PC-9 (cell line): ENCODE measurements at regions of chr7 and their contacts with region 1.

Region 1: GRCh38 chr7:43729214-43729923 is at the start of gene COA1:
- DNase-seq: peak; percentile 88
- H3K4me3 ChIP-seq: peak within 1 kb of the TSS; percentile 70
- H3K27ac ChIP-seq: peak within 1 kb of the TSS; percentile 73
- H3K4me1 ChIP-seq: peaks cover 39% of the 10 kb centered on the region
- H3K27me3 ChIP-seq: no peaks in the 10 kb centered on the region
- CTCF ChIP-seq: no peak
- total RNA-seq, gene COA1: 128 and 151 TPM in 2 replicates

Region 2: DNA sequence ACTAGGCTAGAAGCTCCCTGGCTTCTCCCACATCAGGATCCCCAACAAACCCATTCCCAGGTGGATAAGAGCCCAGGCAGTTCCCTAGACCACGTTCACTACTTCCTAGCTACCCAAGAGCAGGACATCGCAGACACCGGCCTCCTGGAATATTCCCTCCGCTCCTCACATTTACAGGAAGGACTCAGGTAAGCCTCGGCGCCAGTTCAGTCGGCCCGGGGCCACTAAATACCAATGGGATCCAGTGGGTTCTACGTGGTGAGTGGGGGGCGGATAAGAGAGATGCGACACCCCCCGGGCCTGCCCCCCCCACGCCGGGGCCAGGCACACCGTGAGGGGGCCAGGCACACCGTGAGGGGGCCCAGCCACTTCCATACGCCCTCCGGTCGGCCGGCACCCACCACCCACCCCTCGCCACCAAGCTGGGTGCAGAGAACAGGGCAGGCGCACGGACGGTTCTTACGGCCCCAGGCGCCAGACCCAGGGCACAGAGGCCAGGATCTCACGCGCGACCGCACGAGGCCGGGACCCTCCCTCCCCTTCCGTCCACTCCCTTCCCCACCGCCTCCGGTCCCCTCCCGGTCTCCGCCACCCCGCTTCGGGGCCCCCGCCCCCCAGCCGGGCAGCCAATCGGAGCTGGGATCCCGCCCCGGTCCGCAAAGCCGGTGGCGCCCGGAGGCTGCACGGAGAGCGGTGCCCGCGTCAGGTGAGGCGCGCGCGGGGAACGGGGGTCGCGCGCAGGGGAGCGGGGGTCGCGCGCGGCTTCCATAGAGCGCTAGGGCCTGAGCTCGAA is 28.9 kb after region 1 on chr7 and contains the start of gene BLVRA:
- CTCF ChIA-PET with region 1: interaction called, 3 read pairs
- POLR2A ChIA-PET with region 1: interaction called, 6 read pairs
- intact Hi-C with region 1: loop called (anchors 2 kb)
- DNase-seq: peak; percentile 28 to 69
- H3K4me3 ChIP-seq: peak within 1 kb of the TSS; percentile 85
- H3K27ac ChIP-seq: no peak within 1 kb of the TSS
- H3K4me1 ChIP-seq: peaks cover 78% of the 10 kb centered on the region
- H3K27me3 ChIP-seq: no peaks in the 10 kb centered on the region
- CTCF ChIP-seq: no peak
- total RNA-seq, gene BLVRA: 36.4 and 49.5 TPM in 2 replicates

Region 3: GRCh38 chr7:43764039-43764761 is 34.8 kb after region 1 on chr7:
- CTCF ChIA-PET with region 1: interaction called, 3 read pairs
- POLR2A ChIA-PET with region 1: interaction called, 13 read pairs
- intact Hi-C with region 1: no loop called
- DNase-seq: peak in 1 of 2 experiments; percentile 31
- H3K4me3 ChIP-seq: peak overlapping the region; percentile 7; the same call in 1 of the 2 replicates
- H3K27ac ChIP-seq: peak overlapping the region; percentile 71
- H3K4me1 ChIP-seq: peaks cover 73% of the 10 kb centered on the region
- H3K27me3 ChIP-seq: no peaks in the 10 kb centered on the region
- CTCF ChIP-seq: no peak

Region 4: GRCh38 chr7:43779032-43779812 is 49.9 kb after region 1 on chr7:
- CTCF ChIA-PET with region 1: interaction called, 4 read pairs
- POLR2A ChIA-PET with region 1: interaction called, 6 read pairs
- intact Hi-C with region 1: loop called (anchors 2 kb)
- DNase-seq: no peak
- H3K4me3 ChIP-seq: peak overlapping the region; percentile 43; the same call in 1 of the 2 replicates
- H3K27ac ChIP-seq: 0 out of 2 replicates have a peak overlapping the region, but pooled peaks have one; percentile 25
- H3K4me1 ChIP-seq: peaks cover 34% of the 10 kb centered on the region
- H3K27me3 ChIP-seq: no peaks in the 10 kb centered on the region
- CTCF ChIP-seq: no peak

Region 5: GRCh38 chr7:43954524-43955228 is 225.3 kb after region 1 on chr7:
- CTCF ChIA-PET with region 1: no interaction called
- POLR2A ChIA-PET with region 1: no interaction called
- intact Hi-C with region 1: loop called (anchors 10 kb)
- DNase-seq: peak; percentile 51 to 70
- H3K4me3 ChIP-seq: no peak overlapping the region
- H3K27ac ChIP-seq: no peak overlapping the region
- H3K4me1 ChIP-seq: no peaks in the 10 kb centered on the region
- H3K27me3 ChIP-seq: no peaks in the 10 kb centered on the region
- CTCF ChIP-seq: peak; percentile 84

Region 6: GRCh38 chr7:44291066-44291732 is 561.8 kb after region 1 on chr7:
- CTCF ChIA-PET with region 1: no interaction called
- POLR2A ChIA-PET with region 1: no interaction called
- intact Hi-C with region 1: no loop called
- DNase-seq: no peak
- H3K4me3 ChIP-seq: no peak overlapping the region
- H3K27ac ChIP-seq: no peak overlapping the region
- H3K4me1 ChIP-seq: no peaks in the 10 kb centered on the region
- H3K27me3 ChIP-seq: peaks cover 64% of the 10 kb centered on the region
- CTCF ChIP-seq: no peak